Activated CD4-positive, alpha-beta memory T cell treated with anti-CD3 and anti-CD28 coated beads for 36 hours (primary cell): ENCODE measurements at regions of chr16 and their contacts with region 1.

Region 1: GRCh38 chr16:28950648-28951409 is at the start of gene NFATC2IP:
- DNase-seq: peak; percentile 100
- H3K4me3 Mint-ChIP-seq: peak within 1 kb of the TSS; percentile 95
- H3K27ac Mint-ChIP-seq: peak within 1 kb of the TSS; percentile 91
- H3K4me1 Mint-ChIP-seq: peaks cover 24% of the 10 kb centered on the region
- H3K27me3 Mint-ChIP-seq: no peaks in the 10 kb centered on the region
- total RNA-seq, gene NFATC2IP: 57.7 to 64.6 TPM

Region 2: GRCh38 chr16:28082624-28083023 is 868.2 kb before region 1 on chr16:
- CTCF ChIA-PET with region 1: no interaction called
- POLR2A ChIA-PET with region 1: no interaction called
- intact Hi-C with region 1: no loop called
- DNase-seq: no peak
- H3K4me3 Mint-ChIP-seq: no peak overlapping the region
- H3K27ac Mint-ChIP-seq: no peak overlapping the region
- H3K4me1 Mint-ChIP-seq: no peaks in the 10 kb centered on the region
- H3K27me3 Mint-ChIP-seq: no peaks in the 10 kb centered on the region

Region 3: DNA sequence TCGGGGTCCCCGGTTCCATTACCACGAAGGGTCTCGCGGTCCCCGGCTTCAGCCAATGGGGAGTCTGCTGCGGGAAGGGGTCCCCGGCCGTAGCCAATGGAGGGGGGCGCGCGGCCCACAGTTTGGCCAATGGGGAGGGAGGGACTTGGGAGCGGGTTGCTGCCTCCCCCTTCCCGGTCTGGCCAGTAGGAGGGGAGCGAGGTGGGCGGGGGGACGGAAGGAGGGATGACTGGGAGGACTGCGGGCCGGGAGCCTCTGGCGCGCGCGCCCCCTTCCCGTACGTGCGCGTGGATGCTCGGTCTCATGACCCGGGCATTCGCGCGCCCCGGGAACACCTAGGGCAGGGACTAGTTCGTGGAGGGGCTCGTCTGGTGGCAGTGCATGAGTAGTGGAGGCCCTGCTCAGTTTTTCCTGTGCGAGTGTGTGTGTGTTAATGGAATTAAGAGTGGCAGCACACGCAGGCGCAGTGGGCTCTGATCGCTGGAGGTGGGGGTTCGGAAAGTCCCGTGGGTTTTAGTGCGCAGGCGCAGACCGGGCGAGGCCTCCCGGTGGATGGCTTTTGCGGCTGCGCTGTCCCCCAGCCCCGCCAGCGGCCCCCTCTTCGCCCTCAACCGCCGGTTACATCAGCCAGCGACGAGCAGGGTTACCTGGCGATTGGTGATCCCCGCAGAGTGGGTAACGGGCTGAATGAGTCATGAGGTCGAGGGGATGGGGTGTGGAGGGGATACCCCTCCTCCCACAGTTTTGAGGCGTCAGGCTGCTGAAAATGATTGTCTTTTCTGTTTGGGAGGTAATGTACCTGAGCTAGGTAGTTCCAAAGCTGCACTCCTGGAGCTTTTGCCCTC is 126.7 kb before region 1 on chr16:
- CTCF ChIA-PET with region 1: interaction called, 4 read pairs
- POLR2A ChIA-PET with region 1: interaction called, 3 read pairs
- intact Hi-C with region 1: loop called (anchors 1 kb)
- DNase-seq: peak; percentile 98
- H3K4me3 Mint-ChIP-seq: peak overlapping the region; percentile 94
- H3K27ac Mint-ChIP-seq: peak overlapping the region; percentile 99
- H3K4me1 Mint-ChIP-seq: peaks cover 39% of the 10 kb centered on the region
- H3K27me3 Mint-ChIP-seq: no peaks in the 10 kb centered on the region

Region 4: DNA sequence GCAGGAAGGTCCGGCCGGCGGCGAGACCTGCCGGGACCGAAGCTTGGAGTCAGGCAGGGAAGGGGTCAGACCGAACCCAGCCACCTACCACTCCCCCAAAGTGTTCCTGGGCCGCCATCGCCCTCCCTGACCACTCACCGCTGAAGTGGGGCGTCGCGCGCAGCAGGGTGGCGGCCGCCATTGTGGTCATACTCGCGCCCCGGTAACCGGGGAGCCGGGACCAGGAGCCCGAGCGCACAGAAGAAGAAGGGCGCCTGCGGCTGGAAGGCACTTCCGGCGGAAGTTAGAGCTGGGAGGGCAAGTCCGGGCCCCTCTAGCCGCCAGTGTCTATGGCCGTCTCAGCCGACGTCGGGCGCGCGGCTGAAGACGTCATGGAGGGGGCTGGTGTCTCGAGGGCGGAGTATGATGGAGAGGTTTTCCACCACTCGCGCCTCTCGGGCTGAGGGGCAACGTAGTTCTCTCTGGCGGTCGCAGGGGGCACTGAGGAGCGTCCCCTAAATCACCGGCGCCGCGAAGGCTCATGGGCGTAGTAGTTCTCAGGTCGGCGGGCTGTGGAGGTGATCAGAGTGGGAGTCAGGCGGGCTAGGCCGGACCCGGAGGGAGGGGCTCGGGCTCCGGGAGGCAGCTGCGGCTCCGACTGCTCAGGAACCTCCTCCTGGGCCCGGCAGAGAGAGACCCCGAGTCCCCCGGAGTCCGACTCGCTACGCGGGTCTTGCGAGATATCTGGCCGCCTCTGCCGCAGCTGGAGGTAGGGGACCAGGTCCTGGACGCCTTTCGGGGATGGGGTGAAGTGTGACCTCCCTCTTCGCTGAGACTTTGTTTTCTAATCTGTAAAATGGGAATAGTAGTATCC is 104.5 kb before region 1 on chr16 and contains the start of gene TUFM:
- CTCF ChIA-PET with region 1: interaction called, 39 read pairs
- POLR2A ChIA-PET with region 1: interaction called, 3 read pairs
- intact Hi-C with region 1: loop called (anchors 1 kb)
- DNase-seq: peak; percentile 99
- H3K4me3 Mint-ChIP-seq: peak within 1 kb of the TSS; percentile 89
- H3K27ac Mint-ChIP-seq: peak within 1 kb of the TSS; percentile 94
- H3K4me1 Mint-ChIP-seq: peaks cover 24% of the 10 kb centered on the region
- H3K27me3 Mint-ChIP-seq: no peaks in the 10 kb centered on the region
- total RNA-seq, gene TUFM: 221 TPM

Region 5: DNA sequence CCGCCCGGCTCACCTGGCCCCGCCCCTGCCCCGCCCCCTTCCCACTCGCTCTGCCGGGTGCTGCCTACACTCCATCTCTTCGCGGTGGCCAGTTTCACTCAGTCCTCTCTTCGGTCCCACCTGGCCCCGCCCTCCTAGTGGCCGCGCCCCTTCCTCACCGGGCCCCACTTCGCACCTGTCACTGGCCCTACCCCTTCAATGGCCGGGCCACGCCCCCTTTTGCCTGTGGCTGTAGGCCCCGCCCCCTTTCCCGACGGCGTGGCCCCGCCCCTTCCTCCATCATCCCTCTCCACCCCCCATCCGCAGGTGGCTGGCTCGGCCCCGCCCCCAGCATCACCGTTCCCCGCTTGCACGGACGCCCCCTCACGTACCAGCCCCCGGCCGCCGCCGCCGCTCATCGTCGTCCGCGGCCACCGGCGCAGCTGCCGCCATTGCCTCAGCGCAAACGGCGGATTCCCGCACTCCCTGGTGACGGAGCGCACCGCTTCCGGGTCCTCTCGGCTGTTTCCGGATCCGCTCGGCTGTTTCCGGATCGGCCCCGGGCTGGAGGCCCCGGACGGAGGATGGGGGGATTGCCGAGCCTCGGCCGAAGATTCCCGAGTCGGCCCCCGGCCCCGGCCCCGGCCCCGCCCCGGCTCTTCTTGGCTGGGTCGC is 26.0 kb before region 1 on chr16 and contains the start of gene RABEP2:
- CTCF ChIA-PET with region 1: interaction called, 31 read pairs
- POLR2A ChIA-PET with region 1: no interaction called
- intact Hi-C with region 1: loop called (anchors 1 kb)
- DNase-seq: peak; percentile 97
- H3K4me3 Mint-ChIP-seq: peak within 1 kb of the TSS; percentile 94
- H3K27ac Mint-ChIP-seq: peak within 1 kb of the TSS; percentile 98
- H3K4me1 Mint-ChIP-seq: peaks cover 9% of the 10 kb centered on the region
- H3K27me3 Mint-ChIP-seq: no peaks in the 10 kb centered on the region
- total RNA-seq, gene RABEP2: 11.3 to 12.0 TPM

Region 6: GRCh38 chr16:28930652-28931051 is 20.2 kb before region 1 on chr16:
- CTCF ChIA-PET with region 1: interaction called, 31 read pairs
- POLR2A ChIA-PET with region 1: no interaction called
- intact Hi-C with region 1: loop called (anchors 1 kb)
- DNase-seq: no peak
- H3K4me3 Mint-ChIP-seq: no peak overlapping the region
- H3K27ac Mint-ChIP-seq: peak overlapping the region; percentile 31
- H3K4me1 Mint-ChIP-seq: peaks cover 12% of the 10 kb centered on the region
- H3K27me3 Mint-ChIP-seq: no peaks in the 10 kb centered on the region

Region 7: DNA sequence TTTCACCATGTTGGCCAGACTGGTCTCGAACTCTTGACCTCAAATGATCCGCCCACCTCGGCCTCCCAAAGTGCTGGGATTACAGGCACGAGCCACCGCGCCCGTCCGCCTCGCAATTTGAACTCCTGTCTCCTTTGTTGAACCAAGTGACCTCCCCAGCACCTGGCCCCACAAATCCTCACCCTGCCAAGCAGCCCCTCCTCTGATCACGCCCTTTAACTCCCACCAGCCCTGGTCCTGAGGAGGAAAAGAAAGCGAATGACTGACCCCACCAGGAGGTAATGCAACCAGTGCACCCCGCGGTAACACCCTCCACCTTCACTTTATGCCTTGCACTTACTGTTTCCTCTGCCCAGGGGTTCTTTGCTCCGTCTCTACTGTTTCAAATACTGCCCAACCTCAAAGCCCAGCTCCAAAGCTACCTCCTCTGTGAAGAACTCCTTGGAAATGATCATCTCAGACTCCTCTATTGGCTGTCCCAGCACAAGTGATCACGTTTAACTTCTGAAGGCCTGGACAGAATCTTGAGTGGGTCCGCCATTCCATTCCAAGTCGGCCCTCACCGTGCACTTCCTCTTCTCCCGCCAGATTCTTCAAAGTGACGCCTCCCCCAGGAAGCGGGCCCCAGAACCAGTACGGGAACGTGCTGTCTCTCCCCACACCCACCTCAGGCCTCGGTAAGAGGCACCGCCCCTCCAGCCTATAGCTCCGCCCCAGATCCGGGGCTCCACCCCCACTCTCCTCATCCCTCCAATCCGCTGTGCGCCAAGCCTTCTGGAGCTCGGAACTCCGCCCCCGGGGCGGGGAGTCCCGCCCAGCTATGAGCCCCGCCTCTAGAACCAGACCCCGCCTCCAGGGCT is 14.7 kb before region 1 on chr16:
- CTCF ChIA-PET with region 1: interaction called, 14 read pairs
- POLR2A ChIA-PET with region 1: no interaction called
- intact Hi-C with region 1: no loop called
- DNase-seq: peak; percentile 92
- H3K4me3 Mint-ChIP-seq: peak overlapping the region; percentile 56
- H3K27ac Mint-ChIP-seq: no peak overlapping the region
- H3K4me1 Mint-ChIP-seq: peaks cover 10% of the 10 kb centered on the region
- H3K27me3 Mint-ChIP-seq: no peaks in the 10 kb centered on the region

Region 8: GRCh38 chr16:28990375-28991040 is 39.7 kb after region 1 on chr16:
- CTCF ChIA-PET with region 1: no interaction called
- POLR2A ChIA-PET with region 1: no interaction called
- intact Hi-C with region 1: no loop called
- DNase-seq: peak; percentile 89
- H3K4me3 Mint-ChIP-seq: peak overlapping the region; percentile 69
- H3K27ac Mint-ChIP-seq: peak overlapping the region; percentile 98
- H3K4me1 Mint-ChIP-seq: peaks cover 50% of the 10 kb centered on the region
- H3K27me3 Mint-ChIP-seq: no peaks in the 10 kb centered on the region